Caco-2 (cell line): ENCODE measurements at regions of chr16 and their contacts with region 1.

Region 1: DNA sequence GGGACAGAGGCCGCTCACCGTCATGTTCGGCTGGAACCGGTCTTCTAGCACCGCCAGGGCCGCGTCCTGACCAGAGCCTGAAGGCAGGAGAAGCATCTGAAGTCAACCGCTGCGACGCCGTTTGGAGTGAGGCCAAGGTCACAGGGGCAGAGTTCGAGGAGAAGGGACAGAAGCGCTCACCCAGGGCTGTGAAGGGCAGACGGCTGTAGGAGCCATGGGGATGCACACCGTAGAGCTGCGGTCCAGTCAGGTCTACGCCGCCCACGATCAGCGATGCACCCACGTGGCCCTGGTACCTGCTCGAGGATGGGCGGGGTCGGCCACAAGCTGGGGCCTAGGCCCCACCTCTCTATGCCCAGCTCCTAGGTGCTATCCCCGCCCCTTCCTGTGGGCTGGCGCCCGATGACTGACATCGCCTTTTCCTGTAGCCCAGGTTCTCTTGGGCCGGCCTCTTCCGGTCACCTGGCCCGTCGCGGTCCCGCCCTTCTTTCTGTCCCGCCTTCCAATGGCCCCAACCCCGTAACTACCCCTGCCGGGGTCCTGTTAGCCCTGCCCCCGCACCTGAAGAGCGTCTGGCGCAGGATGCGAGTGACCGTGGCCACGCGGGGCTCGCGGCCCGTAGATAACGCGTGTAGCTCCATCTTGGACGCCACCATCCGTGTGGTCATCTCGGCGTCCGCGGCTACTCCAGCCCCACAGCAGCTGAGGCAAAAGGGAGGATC is 1.1 kb downstream of the PSMB10 start:
- DNase-seq: peak; percentile 99
- H3K4me3 ChIP-seq: peak overlapping the region; percentile 87
- H3K4me3 Mint-ChIP-seq: peak overlapping the region; percentile 97
- H3K27ac Mint-ChIP-seq: peak overlapping the region; percentile 95
- H3K4me1 ChIP-seq: peaks cover 16% of the 10 kb centered on the region
- H3K4me1 Mint-ChIP-seq: peaks cover 28% of the 10 kb centered on the region
- H3K27me3 ChIP-seq: no peaks in the 10 kb centered on the region
- H3K27me3 Mint-ChIP-seq: no peaks in the 10 kb centered on the region
- CTCF ChIP-seq: no peak

Region 2: DNA sequence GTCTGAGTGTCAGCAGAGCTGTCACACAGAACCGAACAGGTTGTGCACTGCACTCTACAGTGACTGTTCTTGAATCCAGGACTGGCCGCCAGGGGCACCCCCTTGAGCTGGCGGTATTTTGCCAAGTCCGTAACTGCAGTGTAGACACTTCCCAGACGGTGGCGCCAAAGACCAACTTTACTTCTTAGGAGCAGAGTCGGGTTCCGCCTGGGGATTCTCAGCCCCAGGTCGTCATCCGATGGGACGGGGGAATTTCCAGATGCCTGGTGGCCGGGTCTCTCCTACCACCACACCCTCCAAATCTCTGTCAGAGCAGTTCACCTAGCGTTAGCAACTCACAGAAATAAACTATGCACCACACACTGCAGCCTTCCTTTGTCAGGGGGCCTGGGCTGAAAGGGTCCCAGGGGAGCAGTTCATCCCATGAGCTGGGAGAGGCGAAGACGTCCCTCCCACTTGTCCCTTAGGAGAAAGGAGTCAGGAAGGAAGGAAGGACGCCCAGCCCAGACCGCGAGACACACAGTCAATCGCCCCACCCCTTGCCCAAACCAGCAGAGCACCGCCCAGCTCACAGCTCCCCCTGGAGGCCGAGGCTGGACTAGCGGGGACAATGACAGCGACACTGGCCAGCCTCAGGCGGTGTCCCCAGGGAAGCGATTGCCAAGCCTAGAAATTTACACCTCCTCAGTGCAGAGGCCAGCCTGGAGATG is 414.3 kb before region 1 on chr16:
- CTCF ChIA-PET with region 1: interaction called, 7 read pairs
- POLR2A ChIA-PET with region 1: no interaction called
- intact Hi-C with region 1: loop called (anchors 10 kb)
- DNase-seq: peak; percentile 97 to 98
- H3K4me3 ChIP-seq: peak overlapping the region; percentile 53
- H3K4me3 Mint-ChIP-seq: peak overlapping the region; percentile 80
- H3K27ac Mint-ChIP-seq: peak overlapping the region; percentile 89
- H3K4me1 ChIP-seq: peaks cover 24% of the 10 kb centered on the region
- H3K4me1 Mint-ChIP-seq: peaks cover 32% of the 10 kb centered on the region
- H3K27me3 ChIP-seq: no peaks in the 10 kb centered on the region
- H3K27me3 Mint-ChIP-seq: no peaks in the 10 kb centered on the region
- CTCF ChIP-seq: peak; percentile 86 to 100

Region 3: DNA sequence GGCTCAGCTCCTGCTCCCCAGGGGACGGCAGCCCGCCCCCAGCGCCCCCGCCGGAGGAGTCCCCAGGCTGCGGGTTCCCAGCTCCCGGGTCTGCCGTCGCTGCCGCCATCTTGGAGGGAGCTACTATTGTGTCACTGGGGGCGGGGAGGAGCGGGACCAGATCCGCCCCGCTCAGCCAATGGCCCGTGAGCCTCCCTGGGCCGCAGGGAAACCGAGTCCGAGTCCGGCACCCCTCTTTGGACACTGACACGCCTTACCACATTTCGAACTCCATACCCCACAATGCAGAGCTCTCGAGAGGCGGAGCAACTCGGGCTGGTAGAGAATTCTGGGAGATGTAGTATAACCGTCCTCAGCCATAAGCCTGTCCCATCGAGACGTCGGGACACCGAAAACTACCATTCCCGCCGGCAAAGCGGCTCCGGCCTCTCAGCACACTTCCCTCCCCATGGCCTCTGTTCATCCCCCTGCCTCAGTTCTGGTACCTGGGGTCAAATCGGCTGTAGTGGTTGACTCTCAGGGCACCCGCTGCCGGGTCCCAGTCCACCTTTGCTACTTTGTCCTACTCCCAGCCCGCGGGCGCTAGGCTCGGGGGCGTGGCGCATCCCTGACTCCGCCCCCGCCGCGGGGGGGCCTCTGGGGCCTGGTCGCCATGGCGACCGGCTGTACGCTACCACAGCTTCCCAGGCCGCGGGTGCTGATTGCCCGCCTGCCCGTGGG is 129.0 kb before region 1 on chr16 and contains the starts of genes RANBP10 and TSNAXIP1:
- CTCF ChIA-PET with region 1: interaction called, 9 read pairs
- POLR2A ChIA-PET with region 1: interaction called, 14 read pairs
- intact Hi-C with region 1: no loop called
- DNase-seq: peak; percentile 99
- H3K4me3 ChIP-seq: peak within 1 kb of the TSS; percentile 88
- H3K4me3 Mint-ChIP-seq: peak within 1 kb of the TSS; percentile 83
- H3K27ac Mint-ChIP-seq: peak within 1 kb of the TSS; percentile 81
- H3K4me1 ChIP-seq: peaks cover 10% of the 10 kb centered on the region; the same call in 1 of the 2 replicates
- H3K4me1 Mint-ChIP-seq: peaks cover 9% of the 10 kb centered on the region
- H3K27me3 ChIP-seq: no peaks in the 10 kb centered on the region
- H3K27me3 Mint-ChIP-seq: no peaks in the 10 kb centered on the region
- CTCF ChIP-seq: no peak
- total RNA-seq, gene RANBP10: 21.8 and 23.8 TPM in 2 replicates
- total RNA-seq, gene TSNAXIP1: 0.84 and 0.91 TPM in 2 replicates

Region 4: GRCh38 chr16:67846320-67847063 is 89.1 kb before region 1 on chr16 and contains the start of gene NUTF2:
- CTCF ChIA-PET with region 1: no interaction called
- POLR2A ChIA-PET with region 1: no interaction called
- intact Hi-C with region 1: loop called (anchors 1 kb)
- DNase-seq: peak; percentile 99
- H3K4me3 ChIP-seq: peak within 1 kb of the TSS; percentile 98
- H3K4me3 Mint-ChIP-seq: peak within 1 kb of the TSS; percentile 75
- H3K27ac Mint-ChIP-seq: peak within 1 kb of the TSS; percentile 93
- H3K4me1 ChIP-seq: peaks cover 33% of the 10 kb centered on the region
- H3K4me1 Mint-ChIP-seq: peaks cover 17% of the 10 kb centered on the region
- H3K27me3 ChIP-seq: no peaks in the 10 kb centered on the region
- H3K27me3 Mint-ChIP-seq: no peaks in the 10 kb centered on the region
- CTCF ChIP-seq: no peak
- total RNA-seq, gene NUTF2: 239 and 245 TPM in 2 replicates

Region 5: DNA sequence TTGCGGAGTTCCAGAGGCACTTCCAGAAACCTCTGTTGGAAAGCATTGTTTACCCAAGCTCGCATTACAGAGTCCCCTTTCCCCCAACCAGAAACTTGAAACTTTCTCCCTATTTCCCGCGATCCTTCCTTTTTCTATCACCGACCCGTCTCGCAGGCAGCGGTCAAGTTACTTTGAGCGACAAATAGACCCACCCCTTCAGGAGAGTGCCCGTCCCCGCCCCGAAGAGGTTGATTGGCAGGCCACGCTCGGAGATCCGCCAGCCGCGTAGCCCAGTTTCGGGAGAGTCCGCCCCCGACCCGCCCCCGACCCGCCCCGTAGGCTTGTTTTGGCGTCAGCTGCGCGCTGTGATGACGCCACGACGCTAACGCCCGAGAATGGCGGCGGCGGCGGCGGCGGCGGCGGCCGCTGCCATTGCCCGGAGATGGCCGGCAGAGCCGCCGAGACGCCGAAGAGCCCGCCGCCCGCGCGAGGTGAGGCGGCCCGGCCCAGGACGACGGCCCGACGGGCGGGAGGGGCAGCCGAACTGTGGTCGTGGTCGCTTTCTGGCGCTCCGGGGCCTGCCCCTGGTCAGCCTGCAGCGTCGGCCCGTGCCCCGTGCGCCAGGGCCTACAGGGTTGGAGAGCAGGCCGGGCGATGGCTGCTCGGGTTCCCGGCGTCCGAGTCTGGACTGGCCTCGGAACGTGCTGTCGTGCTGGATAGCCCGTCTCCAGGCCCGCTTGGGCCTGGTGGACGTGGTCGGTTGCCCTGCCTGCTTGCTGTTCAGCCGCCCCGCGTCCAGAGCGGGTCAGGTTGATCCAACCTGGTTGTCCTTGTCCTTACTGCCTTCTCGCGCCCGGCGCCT is 42.4 kb before region 1 on chr16 and contains the start of gene PSKH1:
- CTCF ChIA-PET with region 1: no interaction called
- POLR2A ChIA-PET with region 1: interaction called, 4 read pairs
- intact Hi-C with region 1: loop called (anchors 2 kb)
- DNase-seq: peak; percentile 98
- H3K4me3 ChIP-seq: peak within 1 kb of the TSS; percentile 99
- H3K4me3 Mint-ChIP-seq: peak within 1 kb of the TSS; percentile 89
- H3K27ac Mint-ChIP-seq: peak within 1 kb of the TSS; percentile 97
- H3K4me1 ChIP-seq: peaks cover 17% of the 10 kb centered on the region; the same call in 1 of the 2 replicates
- H3K4me1 Mint-ChIP-seq: peaks cover 14% of the 10 kb centered on the region
- H3K27me3 ChIP-seq: no peaks in the 10 kb centered on the region
- H3K27me3 Mint-ChIP-seq: no peaks in the 10 kb centered on the region
- CTCF ChIP-seq: no peak
- total RNA-seq, gene PSKH1: 35.1 and 41.3 TPM in 2 replicates

Region 6: DNA sequence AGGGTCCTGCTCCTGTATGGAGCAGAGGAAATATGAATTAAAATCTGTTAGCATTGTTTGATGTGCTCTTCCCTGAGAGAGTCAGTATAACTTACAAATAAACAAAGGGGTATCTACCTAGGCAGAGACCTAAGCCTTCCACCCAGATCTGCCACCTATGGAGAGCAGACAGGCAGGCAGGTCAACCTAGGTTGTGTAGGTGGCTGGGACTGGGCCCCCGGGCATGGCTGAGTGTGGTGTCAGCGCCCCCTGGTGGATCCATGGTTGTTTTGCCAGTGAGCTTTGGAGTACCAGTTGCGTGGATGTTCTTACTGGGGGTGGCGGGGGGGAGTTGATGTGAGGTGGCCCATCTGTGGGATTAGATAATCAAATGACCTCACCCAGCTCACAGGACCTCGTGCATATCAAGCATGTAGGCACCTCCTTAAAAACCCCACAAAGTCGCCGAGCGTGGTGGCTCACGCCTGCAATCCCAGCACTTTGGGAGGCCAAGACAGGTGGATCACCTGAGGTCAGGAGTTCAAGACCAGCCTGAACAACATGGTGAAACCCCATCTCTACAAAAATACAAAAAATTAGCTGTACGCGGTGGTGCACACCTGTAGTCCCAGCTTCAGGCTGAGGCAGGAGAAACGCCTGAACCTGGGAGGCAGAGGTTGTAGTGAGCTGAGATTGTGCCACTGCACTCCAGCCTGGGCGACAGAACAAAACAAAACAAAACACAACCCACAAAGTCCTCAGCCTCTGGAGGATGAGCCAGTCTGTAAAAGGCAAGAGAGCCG is 105.1 kb after region 1 on chr16:
- CTCF ChIA-PET with region 1: interaction called, 10 read pairs
- POLR2A ChIA-PET with region 1: interaction called, 3 read pairs
- intact Hi-C with region 1: no loop called
- DNase-seq: peak; percentile 86 to 92
- H3K4me3 ChIP-seq: no peak overlapping the region
- H3K4me3 Mint-ChIP-seq: no peak overlapping the region
- H3K27ac Mint-ChIP-seq: no peak overlapping the region
- H3K4me1 ChIP-seq: no peaks in the 10 kb centered on the region
- H3K4me1 Mint-ChIP-seq: no peaks in the 10 kb centered on the region
- H3K27me3 ChIP-seq: no peaks in the 10 kb centered on the region
- H3K27me3 Mint-ChIP-seq: no peaks in the 10 kb centered on the region
- CTCF ChIP-seq: peak; percentile 92 to 95

Region 7: GRCh38 chr16:68085259-68086071 is 149.9 kb after region 1 on chr16 and contains the start of gene NFATC3:
- CTCF ChIA-PET with region 1: no interaction called
- POLR2A ChIA-PET with region 1: interaction called, 12 read pairs
- intact Hi-C with region 1: no loop called
- DNase-seq: peak; percentile 99
- H3K4me3 ChIP-seq: peak within 1 kb of the TSS; percentile 87
- H3K4me3 Mint-ChIP-seq: peak within 1 kb of the TSS; percentile 71
- H3K27ac Mint-ChIP-seq: peak within 1 kb of the TSS; percentile 83
- H3K4me1 ChIP-seq: peaks cover 28% of the 10 kb centered on the region
- H3K4me1 Mint-ChIP-seq: peaks cover 38% of the 10 kb centered on the region
- H3K27me3 ChIP-seq: no peaks in the 10 kb centered on the region
- H3K27me3 Mint-ChIP-seq: no peaks in the 10 kb centered on the region
- CTCF ChIP-seq: no peak
- total RNA-seq, gene NFATC3: 40.0 and 43.9 TPM in 2 replicates